Motor neuron (in vitro differentiated cells): ENCODE measurements at regions of chr16 and their contacts with region 1.

Region 1: GRCh38 chr16:89860747-89861304 is 12.6 kb upstream of the TCF25 start:
- ATAC-seq: peak; percentile 38 to 73 (median 68)
- H3K4me3 ChIP-seq: no peak overlapping the region
- H3K27ac ChIP-seq: no peak overlapping the region
- H3K4me1 ChIP-seq: peaks cover 0 to 6% of the 10 kb centered on the region in 2 donors

Region 2: DNA sequence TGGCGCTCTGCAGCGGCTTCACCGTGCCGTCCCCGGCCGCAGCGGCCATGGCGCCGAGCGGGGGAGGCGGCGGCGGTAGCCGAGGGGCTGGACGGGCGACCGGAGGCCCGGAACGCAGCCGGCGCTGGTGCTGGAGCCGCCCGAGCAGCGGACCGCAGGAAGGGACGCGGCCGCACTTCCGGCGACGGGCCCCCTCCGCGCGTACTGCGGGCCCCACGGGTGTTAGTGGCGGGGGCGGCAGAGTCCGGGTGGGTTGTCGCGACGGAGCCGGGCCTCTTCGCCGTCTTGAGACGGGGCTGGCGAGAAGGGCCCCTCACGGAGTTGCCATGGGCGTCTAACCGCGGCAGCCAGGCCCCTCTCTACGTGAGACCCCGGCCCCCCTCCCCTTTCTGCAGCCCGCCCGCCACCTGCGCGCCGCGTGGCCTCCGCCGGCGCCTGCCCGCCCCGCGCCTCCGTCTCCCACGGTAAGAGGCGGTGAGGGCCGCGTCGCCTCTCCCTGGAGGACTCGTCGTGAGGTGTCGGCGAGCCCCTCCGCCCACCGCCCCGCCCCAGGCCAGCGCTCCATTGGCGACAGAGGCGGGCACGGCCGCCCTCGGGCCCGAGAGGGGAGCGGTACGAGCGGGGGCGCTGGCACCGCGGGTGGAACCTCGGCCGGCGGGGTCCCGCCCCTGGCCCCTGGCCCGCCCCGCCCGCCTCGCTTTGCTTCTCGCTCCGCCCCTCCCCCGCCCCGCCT is 139.8 kb before region 1 on chr16 and contains the starts of genes VPS9D1 and ZNF276:
- in situ Hi-C with region 1: no loop called
- ATAC-seq: peak; percentile 50 to 83 (median 76)
- H3K4me3 ChIP-seq: peak within 1 kb of the TSS; percentile 80 to 100 (median 96)
- H3K27ac ChIP-seq: peak within 1 kb of the TSS; percentile 97 to 99
- H3K4me1 ChIP-seq: peaks cover 14 to 25% of the 10 kb centered on the region in 2 donors
- total RNA-seq, gene VPS9D1: 4.5 to 14.6 (median 8.9) TPM
- total RNA-seq, gene ZNF276: 10.5 to 61.0 (median 16.0) TPM

Region 3: DNA sequence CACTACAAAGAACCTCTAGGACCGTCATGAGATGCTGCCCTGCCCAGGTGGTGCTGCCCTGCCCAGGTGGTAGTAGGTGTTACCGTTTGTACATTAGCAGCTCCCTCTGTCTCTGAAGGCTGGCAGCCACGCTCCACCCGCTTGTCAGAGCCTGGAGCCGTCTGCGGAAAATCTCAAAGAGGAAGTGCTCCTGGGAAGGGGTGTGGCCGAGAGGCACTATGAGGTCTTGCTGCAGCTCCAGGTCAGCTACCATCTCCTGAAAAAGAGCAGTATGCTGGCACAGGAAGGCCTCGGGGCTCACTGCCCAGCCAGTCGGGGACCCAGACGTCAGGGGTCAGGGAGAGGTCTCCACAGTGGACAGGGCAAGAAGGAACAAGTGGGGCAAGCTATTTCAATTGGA is 111.2 kb before region 1 on chr16:
- in situ Hi-C with region 1: loop called in 1 of 9 experiments (anchors 10 kb)
- ATAC-seq: peak in 1 of 8 experiments; percentile 31
- H3K4me3 ChIP-seq: no peak overlapping the region
- H3K27ac ChIP-seq: no peak overlapping the region
- H3K4me1 ChIP-seq: no peaks in the 10 kb centered on the region

Region 4: GRCh38 chr16:89999831-90000574 is 139.2 kb after region 1 on chr16:
- in situ Hi-C with region 1: no loop called
- ATAC-seq: peak in 2 of 8 experiments; percentile 16 to 25
- H3K4me3 ChIP-seq: no peak overlapping the region
- H3K27ac ChIP-seq: no peak overlapping the region
- H3K4me1 ChIP-seq: no peaks in the 10 kb centered on the region